ENCODE measurements at regions of chr14 and their contacts with region 1.

Region 1: GRCh38 chr14:75577729-75578101 is 705 bp upstream of the FLVCR2 start:
- DNase-seq: peak; percentile 65 to 73 (median 68)
- ATAC-seq: peak; percentile 99
- H3K4me3 ChIP-seq: no peak overlapping the region
- H3K27ac ChIP-seq: no peak overlapping the region
- H3K4me1 ChIP-seq: peaks cover 0 to 14% of the 10 kb centered on the region in 2 experiments; a peak in 2 of 5 replicates
- H3K27me3 ChIP-seq: peaks cover 4 to 26% of the 10 kb centered on the region in 2 experiments; a peak in 4 of 5 replicates
- CTCF ChIP-seq: peak; percentile 65 to 69 (median 68)
- EP300 ChIP-seq: no peak
- POLR2A ChIP-seq: no peak
- RAD21 ChIP-seq: peak; percentile 67 to 72

Region 2: DNA sequence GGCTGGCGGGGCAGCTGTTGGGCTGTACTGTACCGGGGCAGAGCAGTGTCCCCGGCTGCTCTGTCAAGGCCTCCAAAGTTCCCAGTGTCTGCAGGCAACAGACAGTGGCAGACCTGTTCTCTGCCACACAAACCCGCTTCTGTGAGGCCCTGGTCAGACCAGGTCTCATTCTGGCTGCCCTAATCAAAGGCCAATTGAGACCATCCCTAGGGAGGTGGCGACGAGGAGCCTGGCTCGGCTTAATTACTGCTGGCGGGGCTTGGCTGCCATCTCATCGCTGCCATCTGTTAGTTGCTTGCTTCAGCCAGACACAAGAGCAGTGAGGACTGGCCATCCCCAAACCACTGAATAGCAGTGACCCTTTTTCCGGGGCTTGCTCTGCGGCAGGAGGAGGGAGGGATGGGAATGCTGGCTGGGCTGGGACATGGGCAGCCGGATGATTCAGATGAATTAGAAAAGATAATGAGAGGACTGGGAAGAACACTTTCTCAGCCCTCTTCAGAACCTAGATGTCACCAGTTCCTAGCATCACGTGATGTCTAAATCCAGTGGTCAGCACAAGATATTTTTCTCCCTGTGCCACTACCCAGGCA is 58.5 kb after region 1 on chr14:
- CTCF ChIA-PET with region 1: no interaction called
- POLR2A ChIA-PET with region 1: no interaction called
- in situ Hi-C with region 1: no loop called
- intact Hi-C with region 1: no loop called
- DNase-seq: no peak
- ATAC-seq: no peak
- H3K4me3 ChIP-seq: no peak overlapping the region
- H3K27ac ChIP-seq: no peak overlapping the region
- H3K4me1 ChIP-seq: no peaks in the 10 kb centered on the region
- H3K27me3 ChIP-seq: peaks cover 10 to 39% of the 10 kb centered on the region in 2 experiments; a peak in 4 of 5 replicates
- CTCF ChIP-seq: no peak
- EP300 ChIP-seq: no peak
- POLR2A ChIP-seq: no peak
- RAD21 ChIP-seq: no peak

Region 3: DNA sequence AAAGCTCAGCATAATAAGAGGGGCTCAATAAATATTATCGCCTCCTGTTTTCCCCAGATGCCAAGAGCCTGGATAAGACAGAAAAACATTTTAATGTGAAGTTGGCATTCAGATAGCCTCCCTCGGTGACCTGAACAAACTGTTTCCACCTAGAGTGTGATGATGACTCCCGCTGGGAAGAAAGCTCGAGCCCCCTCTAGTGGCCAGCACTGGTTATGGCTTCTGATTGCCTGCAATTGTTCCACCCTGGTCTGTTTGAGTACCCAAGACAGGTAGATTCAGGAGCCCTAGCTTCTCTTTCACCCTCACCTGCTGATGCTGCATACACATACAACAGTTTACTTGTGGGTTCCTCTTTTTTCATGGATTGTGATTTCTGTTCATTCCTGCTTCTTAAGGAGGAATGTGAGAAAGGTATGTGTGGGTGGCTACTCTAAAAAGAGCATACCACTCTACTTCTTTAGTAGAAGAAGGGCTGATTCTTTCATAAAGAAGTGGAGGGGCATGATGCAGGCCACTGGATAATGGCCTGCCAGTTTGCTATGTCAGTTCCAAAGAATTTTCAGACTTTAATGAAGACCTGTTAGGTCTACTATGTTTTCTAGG is 76.5 kb after region 1 on chr14:
- CTCF ChIA-PET with region 1: interaction called, 20 read pairs
- POLR2A ChIA-PET with region 1: interaction called, 4 read pairs
- in situ Hi-C with region 1: loop called (anchors 5 kb)
- intact Hi-C with region 1: loop called (anchors 1 kb)
- DNase-seq: peak; percentile 60 to 68 (median 66)
- ATAC-seq: peak; percentile 90
- H3K4me3 ChIP-seq: no peak overlapping the region
- H3K27ac ChIP-seq: no peak overlapping the region
- H3K4me1 ChIP-seq: no peaks in the 10 kb centered on the region; a peak in 1 of 5 replicates
- H3K27me3 ChIP-seq: no peaks in the 10 kb centered on the region
- CTCF ChIP-seq: peak; percentile 79 to 85 (median 83)
- EP300 ChIP-seq: no peak
- POLR2A ChIP-seq: no peak
- RAD21 ChIP-seq: peak; percentile 61 to 73

Region 4: DNA sequence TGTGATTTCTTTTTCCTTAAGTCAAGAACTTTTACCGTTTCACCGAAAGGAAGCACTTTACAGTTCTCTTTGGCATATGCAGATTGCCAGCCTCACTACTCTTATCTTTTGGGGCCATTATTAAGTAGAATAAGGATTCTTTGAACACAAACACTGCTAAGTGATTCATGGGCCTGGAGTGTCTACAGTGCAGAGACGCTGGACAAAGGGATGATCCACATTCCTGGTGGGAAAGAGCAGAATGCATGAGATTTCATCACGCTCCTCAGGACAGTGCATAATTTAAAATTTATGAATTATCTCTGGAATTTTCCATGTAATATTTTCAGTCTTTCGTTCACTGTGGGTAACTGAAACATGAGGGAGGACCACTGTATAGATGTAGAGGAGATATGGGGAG is 173.6 kb after region 1 on chr14:
- CTCF ChIA-PET with region 1: no interaction called
- POLR2A ChIA-PET with region 1: no interaction called
- in situ Hi-C with region 1: no loop called
- intact Hi-C with region 1: no loop called
- DNase-seq: no peak
- ATAC-seq: no peak
- H3K4me3 ChIP-seq: no peak overlapping the region
- H3K27ac ChIP-seq: no peak overlapping the region
- H3K4me1 ChIP-seq: peaks cover 0 to 3% of the 10 kb centered on the region in 2 experiments; a peak in 2 of 5 replicates
- H3K27me3 ChIP-seq: no peaks in the 10 kb centered on the region
- CTCF ChIP-seq: no peak
- EP300 ChIP-seq: no peak
- POLR2A ChIP-seq: no peak
- RAD21 ChIP-seq: no peak